ENCODE measurements at regions of chr9 and their contacts with region 1.

Region 1: DNA sequence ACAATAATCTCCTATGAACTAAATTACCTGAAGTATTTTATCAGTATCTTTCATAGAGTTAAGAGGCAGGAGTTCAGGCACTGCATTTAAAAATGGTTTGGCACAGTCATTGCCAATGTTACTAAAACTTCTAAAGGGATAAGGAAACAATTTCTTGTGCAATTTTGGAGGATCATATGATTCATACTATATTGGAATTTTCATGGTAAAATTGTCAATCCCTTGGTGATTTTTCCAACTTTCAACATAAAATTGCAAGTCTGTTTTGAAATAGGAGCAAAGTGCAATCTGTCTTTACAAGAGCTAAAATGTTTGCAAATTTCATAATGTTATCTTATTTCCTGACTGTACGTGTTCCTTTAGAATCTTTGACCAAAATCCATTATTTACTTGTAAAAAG is 211.1 kb downstream of the DMRTA1 start:
- DNase-seq: no peak
- H3K4me3 ChIP-seq: no peak overlapping the region
- H3K27ac ChIP-seq: no peak overlapping the region
- H3K4me1 ChIP-seq: no peaks in the 10 kb centered on the region
- H3K27me3 ChIP-seq: no peaks in the 10 kb centered on the region
- CTCF ChIP-seq: no peak
- POLR2A ChIP-seq: no peak

Region 2: GRCh38 chr9:22522206-22522740 is 135.4 kb before region 1 on chr9:
- CTCF ChIA-PET with region 1: no interaction called
- POLR2A ChIA-PET with region 1: no interaction called
- dilution Hi-C with region 1: no loop called
- intact Hi-C with region 1: no loop called
- DNase-seq: no peak
- H3K4me3 ChIP-seq: no peak overlapping the region
- H3K27ac ChIP-seq: no peak overlapping the region
- H3K4me1 ChIP-seq: no peaks in the 10 kb centered on the region
- H3K27me3 ChIP-seq: no peaks in the 10 kb centered on the region
- CTCF ChIP-seq: no peak
- POLR2A ChIP-seq: no peak

Region 3: DNA sequence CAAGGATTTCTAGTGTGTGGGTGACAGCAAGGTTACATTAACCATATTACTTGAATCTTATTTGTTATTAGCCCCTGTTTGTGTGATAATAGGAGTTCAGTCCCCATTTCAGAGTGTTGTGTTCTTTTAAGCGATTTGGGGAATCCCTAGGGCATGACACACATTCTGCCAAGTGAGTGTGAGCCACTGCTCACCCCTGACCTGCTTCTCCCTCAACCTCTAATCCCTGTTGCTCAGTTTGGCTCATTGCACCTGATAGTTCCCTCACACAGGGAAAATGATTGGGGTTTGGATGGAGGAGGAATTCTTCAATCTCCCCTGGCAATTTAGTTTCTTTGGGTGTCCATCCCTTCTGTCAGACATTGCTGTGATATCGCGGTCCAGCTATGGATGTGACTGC is 61.9 kb before region 1 on chr9:
- CTCF ChIA-PET with region 1: no interaction called
- POLR2A ChIA-PET with region 1: no interaction called
- dilution Hi-C with region 1: no loop called
- intact Hi-C with region 1: loop called (anchors 10 kb)
- DNase-seq: no peak
- H3K4me3 ChIP-seq: no peak overlapping the region
- H3K27ac ChIP-seq: no peak overlapping the region
- H3K4me1 ChIP-seq: no peaks in the 10 kb centered on the region
- H3K27me3 ChIP-seq: no peaks in the 10 kb centered on the region
- CTCF ChIP-seq: no peak
- POLR2A ChIP-seq: no peak